Mammary epithelial cell (primary cell): ENCODE measurements at regions of chr5 and their contacts with region 1.

Region 1: DNA sequence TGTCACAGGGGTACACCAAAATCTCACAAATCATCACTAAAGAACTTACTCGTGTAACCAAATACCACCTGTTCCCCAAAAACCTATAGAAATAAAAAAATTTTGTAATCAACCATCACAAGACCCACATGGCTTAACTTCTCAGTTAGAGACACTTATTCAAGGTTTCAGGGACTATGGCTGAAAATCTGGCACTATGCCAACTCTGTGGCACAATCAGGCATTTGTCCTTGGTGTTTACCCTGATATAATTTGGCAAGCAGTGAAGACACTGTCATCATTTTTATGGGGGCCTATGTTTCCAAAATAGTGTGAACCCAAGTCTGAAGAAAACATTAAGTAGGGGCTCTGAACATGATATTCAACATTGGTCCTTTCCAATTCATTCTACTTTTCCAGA is 59.0 kb downstream of the ZNF622 start:
- DNase-seq: no peak
- H3K4me3 ChIP-seq: no peak overlapping the region
- H3K27ac ChIP-seq: no peak overlapping the region
- H3K4me1 ChIP-seq: peaks cover 9% of the 10 kb centered on the region
- H3K27me3 ChIP-seq: no peaks in the 10 kb centered on the region
- CTCF ChIP-seq: no peak

Region 2: GRCh38 chr5:16225927-16226326 is 180.7 kb before region 1 on chr5:
- CTCF ChIA-PET with region 1: no interaction called
- dilution Hi-C with region 1: no loop called
- in situ Hi-C with region 1: no loop called
- intact Hi-C with region 1: no loop called
- DNase-seq: no peak
- H3K4me3 ChIP-seq: no peak overlapping the region
- H3K27ac ChIP-seq: no peak overlapping the region
- H3K4me1 ChIP-seq: no peaks in the 10 kb centered on the region
- H3K27me3 ChIP-seq: no peaks in the 10 kb centered on the region
- CTCF ChIP-seq: no peak

Region 3: GRCh38 chr5:16372493-16372892 is 34.1 kb before region 1 on chr5:
- CTCF ChIA-PET with region 1: no interaction called
- dilution Hi-C with region 1: loop called (anchors 5 kb)
- in situ Hi-C with region 1: no loop called
- intact Hi-C with region 1: no loop called
- DNase-seq: no peak
- H3K4me3 ChIP-seq: no peak overlapping the region
- H3K27ac ChIP-seq: no peak overlapping the region
- H3K4me1 ChIP-seq: no peaks in the 10 kb centered on the region
- H3K27me3 ChIP-seq: no peaks in the 10 kb centered on the region
- CTCF ChIP-seq: no peak